Right ventricle myocardium superior (tissue), 1 donor: ENCODE measurements at regions of chr15 and their contacts with region 1.

Region 1: GRCh38 chr15:92383519-92384326 is 10.0 kb upstream of the ST8SIA2 start:
- DNase-seq: no peak
- ATAC-seq: peak; percentile 67

Region 2: DNA sequence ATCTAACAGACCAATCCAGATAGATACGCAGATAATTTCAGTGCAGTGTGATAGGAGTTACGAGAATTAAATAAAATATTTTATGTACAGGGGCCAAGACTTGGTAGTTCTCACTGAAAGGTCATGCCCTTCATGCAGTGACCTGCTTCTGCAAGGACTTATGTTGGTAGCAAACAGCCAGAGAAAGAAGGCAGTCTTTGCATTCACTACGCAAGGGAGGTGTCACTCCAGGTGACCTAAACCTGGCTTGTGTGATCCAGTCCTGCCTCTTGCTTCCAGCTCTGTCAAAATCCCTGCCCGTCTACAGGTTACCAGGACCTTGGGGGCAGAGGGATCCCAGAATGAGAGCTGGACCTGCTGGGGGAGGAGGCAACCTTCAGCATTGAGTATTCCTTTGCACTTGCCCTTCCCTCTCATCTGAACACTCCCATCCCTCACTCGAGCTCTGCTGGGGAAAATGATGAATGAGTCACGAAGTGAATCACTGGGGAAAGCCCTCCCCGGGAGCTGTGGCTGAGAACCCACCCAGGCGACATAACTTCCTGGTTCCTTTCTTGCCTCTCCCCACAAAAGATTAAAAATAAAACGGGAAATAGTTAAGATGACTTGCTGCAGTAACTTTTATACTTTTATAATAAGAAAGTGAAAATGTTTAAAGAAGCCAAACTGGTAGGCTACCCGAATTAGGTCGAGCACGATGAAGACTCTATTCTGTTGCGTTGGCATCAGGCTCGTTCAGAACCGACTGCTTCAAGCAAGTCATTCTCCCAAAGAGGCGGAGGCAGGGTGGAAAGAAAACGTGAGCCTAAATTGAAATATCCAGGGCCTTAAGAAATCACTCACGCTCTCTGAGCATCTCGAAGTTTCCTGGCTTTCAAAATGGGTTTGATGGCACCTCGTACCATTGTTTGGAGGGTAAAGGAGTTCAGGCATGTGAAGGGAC is 314.1 kb before region 1 on chr15:
- intact Hi-C with region 1: no loop called
- DNase-seq: no peak
- ATAC-seq: peak; percentile 64

Region 3: GRCh38 chr15:92277776-92278175 is 105.9 kb before region 1 on chr15:
- intact Hi-C with region 1: loop called (anchors 5 kb)
- DNase-seq: no peak
- ATAC-seq: peak; percentile 84